Activated CD4-positive, alpha-beta T cell treated with anti-CD3 and anti-CD28 coated beads for 36 hours (primary cell): ENCODE measurements at regions of chr7 and their contacts with region 1.

Region 1: GRCh38 chr7:99408379-99409191 is at the starts of genes BUD31 and PDAP1:
- DNase-seq: peak; percentile 94
- ATAC-seq: peak; percentile 89
- H3K4me3 Mint-ChIP-seq: peak within 1 kb of the TSS; percentile 90
- H3K27ac Mint-ChIP-seq: peak within 1 kb of the TSS; percentile 96
- H3K4me1 Mint-ChIP-seq: peaks cover 40% of the 10 kb centered on the region
- H3K27me3 Mint-ChIP-seq: no peaks in the 10 kb centered on the region
- total RNA-seq, gene BUD31: 140 to 190 TPM
- total RNA-seq, gene PDAP1: 171 TPM

Region 2: GRCh38 chr7:99325545-99326407 is 82.8 kb before region 1 on chr7 and contains the start of gene ARPC1A:
- CTCF ChIA-PET with region 1: interaction called, 3 read pairs
- POLR2A ChIA-PET with region 1: no interaction called
- intact Hi-C with region 1: loop called in 1 of 2 experiments (anchors 2 kb)
- DNase-seq: peak; percentile 95
- ATAC-seq: peak; percentile 86
- H3K4me3 Mint-ChIP-seq: peak within 1 kb of the TSS; percentile 85
- H3K27ac Mint-ChIP-seq: peak within 1 kb of the TSS; percentile 75
- H3K4me1 Mint-ChIP-seq: peaks cover 40% of the 10 kb centered on the region
- H3K27me3 Mint-ChIP-seq: no peaks in the 10 kb centered on the region
- total RNA-seq, gene ARPC1A: 52.3 to 65.6 TPM

Region 3: GRCh38 chr7:99392677-99393354 is 15.8 kb before region 1 on chr7:
- CTCF ChIA-PET with region 1: interaction called, 5 read pairs
- POLR2A ChIA-PET with region 1: interaction called, 6 read pairs
- intact Hi-C with region 1: loop called (anchors 1 to 2 kb)
- DNase-seq: peak; percentile 89
- ATAC-seq: peak; percentile 90
- H3K4me3 Mint-ChIP-seq: peak overlapping the region; percentile 50
- H3K27ac Mint-ChIP-seq: peak overlapping the region; percentile 80
- H3K4me1 Mint-ChIP-seq: peaks cover 20% of the 10 kb centered on the region
- H3K27me3 Mint-ChIP-seq: no peaks in the 10 kb centered on the region

Region 4: DNA sequence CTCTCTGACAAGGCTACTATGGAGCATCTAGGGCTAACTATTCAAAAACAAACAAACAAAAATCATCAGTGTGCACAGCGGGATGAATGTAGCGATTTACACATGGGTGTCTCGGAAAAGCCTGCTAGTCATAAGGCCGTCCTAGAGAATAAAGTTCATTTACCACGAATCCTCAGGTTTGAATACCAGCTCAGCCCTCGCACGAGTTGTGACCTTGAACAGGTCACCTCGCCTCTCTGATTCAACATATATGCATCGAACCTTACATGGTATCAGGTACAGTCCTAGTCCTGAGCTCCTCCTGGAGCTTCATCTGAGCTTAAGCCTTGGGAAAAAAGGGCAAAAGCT is 56.8 kb after region 1 on chr7:
- CTCF ChIA-PET with region 1: interaction called, 3 read pairs
- POLR2A ChIA-PET with region 1: interaction called, 3 read pairs
- intact Hi-C with region 1: loop called (anchors 1 to 5 kb)
- DNase-seq: peak; percentile 31
- ATAC-seq: peak; percentile 4
- H3K4me3 Mint-ChIP-seq: peak overlapping the region; percentile 85
- H3K27ac Mint-ChIP-seq: peak overlapping the region; percentile 84
- H3K4me1 Mint-ChIP-seq: peaks cover 34% of the 10 kb centered on the region
- H3K27me3 Mint-ChIP-seq: no peaks in the 10 kb centered on the region

Region 5: GRCh38 chr7:99551767-99552463 is 143.3 kb after region 1 on chr7 and contains the start of gene FAM200A:
- CTCF ChIA-PET with region 1: no interaction called
- POLR2A ChIA-PET with region 1: interaction called, 3 read pairs
- intact Hi-C with region 1: loop called in 1 of 2 experiments (anchors 1 kb)
- DNase-seq: peak; percentile 92
- ATAC-seq: peak; percentile 99
- H3K4me3 Mint-ChIP-seq: peak within 1 kb of the TSS; percentile 75
- H3K27ac Mint-ChIP-seq: peak within 1 kb of the TSS; percentile 62
- H3K4me1 Mint-ChIP-seq: peaks cover 30% of the 10 kb centered on the region
- H3K27me3 Mint-ChIP-seq: no peaks in the 10 kb centered on the region
- total RNA-seq, gene FAM200A: 4.9 to 5.5 TPM

Region 6: GRCh38 chr7:100088621-100089457 is 680.3 kb after region 1 on chr7 and contains the start of gene COPS6:
- CTCF ChIA-PET with region 1: no interaction called
- POLR2A ChIA-PET with region 1: no interaction called
- intact Hi-C with region 1: loop called in 1 of 2 experiments (anchors 5 kb)
- DNase-seq: peak; percentile 92
- ATAC-seq: peak; percentile 67
- H3K4me3 Mint-ChIP-seq: peak within 1 kb of the TSS; percentile 89
- H3K27ac Mint-ChIP-seq: peak within 1 kb of the TSS; percentile 96
- H3K4me1 Mint-ChIP-seq: peaks cover 25% of the 10 kb centered on the region
- H3K27me3 Mint-ChIP-seq: no peaks in the 10 kb centered on the region
- total RNA-seq, gene COPS6: 88.6 to 89.0 TPM